ENCODE measurements at regions of chr1 and their contacts with region 1.

Region 1: GRCh38 chr1:217106231-217106910 is 383.1 kb upstream of the ESRRG start:
- DNase-seq: no peak
- H3K4me3 Mint-ChIP-seq: no peak overlapping the region
- H3K27ac Mint-ChIP-seq: no peak overlapping the region
- H3K4me1 Mint-ChIP-seq: no peaks in the 10 kb centered on the region
- H3K27me3 Mint-ChIP-seq: no peaks in the 10 kb centered on the region

Region 2: DNA sequence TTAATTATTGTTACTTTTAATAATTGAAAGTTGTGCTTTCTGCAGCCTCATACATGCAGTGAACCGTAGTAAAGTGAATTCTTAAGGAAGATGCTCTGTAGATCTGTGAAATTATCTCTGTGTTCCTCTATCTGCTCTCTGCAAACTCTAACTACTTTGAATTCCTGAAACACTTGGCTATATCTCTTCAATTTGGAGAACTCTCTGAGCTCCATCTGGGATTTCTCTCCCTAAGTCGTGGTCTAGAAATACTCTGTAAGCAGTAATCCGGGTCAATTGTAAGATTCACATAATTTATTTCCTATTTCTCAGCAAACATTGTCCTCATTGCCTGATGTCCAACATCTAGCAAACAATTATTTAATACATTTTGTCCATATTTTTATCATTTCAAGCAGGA is 848.0 kb before region 1 on chr1:
- CTCF ChIA-PET with region 1: no interaction called
- intact Hi-C with region 1: loop called (anchors 5 kb)
- DNase-seq: no peak
- H3K4me3 Mint-ChIP-seq: no peak overlapping the region
- H3K27ac Mint-ChIP-seq: no peak overlapping the region
- H3K4me1 Mint-ChIP-seq: no peaks in the 10 kb centered on the region
- H3K27me3 Mint-ChIP-seq: no peaks in the 10 kb centered on the region

Region 3: DNA sequence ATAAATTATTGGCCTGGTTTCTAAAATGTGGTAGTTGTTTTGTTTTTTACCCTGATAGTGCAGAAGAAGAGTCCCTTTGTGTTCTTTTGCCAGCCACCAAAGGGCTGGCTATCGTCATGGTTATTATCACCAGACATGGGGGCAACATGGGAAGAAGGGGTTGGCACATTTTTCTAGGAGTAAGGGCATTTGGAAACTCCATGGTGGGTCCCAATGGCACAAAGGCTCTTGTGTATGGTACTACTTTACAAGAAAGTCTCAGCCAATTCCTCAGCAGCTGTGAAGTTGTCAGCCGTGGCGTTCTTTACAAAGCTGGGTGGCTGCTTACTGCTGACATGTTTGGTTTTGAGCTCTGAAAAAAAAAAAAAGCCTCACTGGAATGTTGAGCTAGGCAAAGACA is 52.7 kb before region 1 on chr1:
- CTCF ChIA-PET with region 1: no interaction called
- intact Hi-C with region 1: no loop called
- DNase-seq: no peak
- H3K4me3 Mint-ChIP-seq: no peak overlapping the region
- H3K27ac Mint-ChIP-seq: no peak overlapping the region
- H3K4me1 Mint-ChIP-seq: no peaks in the 10 kb centered on the region
- H3K27me3 Mint-ChIP-seq: peaks cover 4% of the 10 kb centered on the region